MCF 10A (cell line): ENCODE measurements at regions of chr5 and their contacts with region 1.

Region 1: DNA sequence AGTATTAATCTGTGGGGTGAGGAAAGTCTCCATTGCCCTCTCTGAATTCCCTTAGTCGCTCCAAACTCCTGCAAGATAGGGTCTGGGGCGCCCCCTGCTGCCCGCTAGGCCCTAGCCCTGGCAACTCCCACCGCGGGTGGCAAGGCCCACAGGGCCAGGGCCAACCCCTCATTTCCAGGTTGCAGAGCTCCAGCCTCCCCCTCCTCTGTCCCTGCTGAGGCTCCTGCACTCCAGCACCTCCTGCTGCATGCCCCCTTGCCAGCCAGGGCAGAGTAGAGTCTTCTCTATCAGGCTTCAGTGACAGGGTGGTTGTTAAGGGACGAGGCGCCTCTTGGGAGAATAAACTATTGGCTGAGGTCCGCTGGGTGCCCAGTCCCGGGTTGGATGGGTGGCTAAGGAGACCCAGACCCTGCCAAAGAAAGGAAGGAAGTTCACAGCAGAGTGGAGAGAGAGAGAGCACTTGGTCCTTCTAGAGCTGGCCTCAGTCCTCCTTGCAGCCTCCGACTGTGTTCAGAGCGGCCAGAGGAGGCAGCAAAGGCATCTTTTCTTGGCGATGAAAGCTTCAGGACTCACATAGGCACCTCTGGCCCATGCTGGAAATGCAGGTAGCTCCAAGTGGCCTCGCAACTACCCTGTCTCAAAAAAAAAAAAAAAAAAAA is 45.6 kb downstream of the SAR1B start:
- DNase-seq: peak; percentile 88
- H3K4me3 Mint-ChIP-seq: no peak overlapping the region
- H3K27ac Mint-ChIP-seq: no peak overlapping the region
- H3K4me1 Mint-ChIP-seq: peaks cover 18% of the 10 kb centered on the region
- H3K27me3 Mint-ChIP-seq: no peaks in the 10 kb centered on the region
- CTCF ChIP-seq: peak; percentile 89

Region 2: GRCh38 chr5:134296213-134296612 is 290.8 kb before region 1 on chr5:
- CTCF ChIA-PET with region 1: interaction called, 35 read pairs
- POLR2A ChIA-PET with region 1: interaction called, 3 read pairs
- intact Hi-C with region 1: no loop called
- DNase-seq: no peak
- H3K4me3 Mint-ChIP-seq: no peak overlapping the region
- H3K27ac Mint-ChIP-seq: no peak overlapping the region
- H3K4me1 Mint-ChIP-seq: no peaks in the 10 kb centered on the region
- H3K27me3 Mint-ChIP-seq: peaks cover 2% of the 10 kb centered on the region
- CTCF ChIP-seq: no peak

Region 3: DNA sequence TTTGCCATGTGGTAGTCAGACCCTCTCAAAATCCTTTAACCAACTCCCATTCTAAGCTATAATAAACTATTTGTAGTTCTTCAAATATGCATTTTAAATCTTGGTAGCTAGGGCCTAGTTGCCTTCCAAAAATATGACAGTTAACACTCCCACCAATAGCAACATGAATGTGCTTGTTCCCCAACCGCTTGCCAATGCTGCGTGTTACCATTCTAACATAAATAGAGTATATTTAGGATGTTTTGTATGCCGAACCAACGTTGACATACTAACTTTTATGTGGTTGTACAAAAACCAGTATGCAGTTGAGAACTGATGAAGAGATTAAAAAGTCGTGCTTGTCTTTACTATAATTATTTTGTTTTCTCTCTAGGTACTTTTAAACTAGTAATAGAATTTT is 206.6 kb before region 1 on chr5:
- CTCF ChIA-PET with region 1: interaction called, 19 read pairs
- POLR2A ChIA-PET with region 1: interaction called, 4 read pairs
- intact Hi-C with region 1: no loop called
- DNase-seq: no peak
- H3K4me3 Mint-ChIP-seq: no peak overlapping the region
- H3K27ac Mint-ChIP-seq: no peak overlapping the region
- H3K4me1 Mint-ChIP-seq: no peaks in the 10 kb centered on the region
- H3K27me3 Mint-ChIP-seq: no peaks in the 10 kb centered on the region
- CTCF ChIP-seq: no peak

Region 4: GRCh38 chr5:134603059-134603458 is 16.1 kb after region 1 on chr5:
- CTCF ChIA-PET with region 1: interaction called, 31 read pairs
- POLR2A ChIA-PET with region 1: interaction called, 9 read pairs
- intact Hi-C with region 1: no loop called
- DNase-seq: peak; percentile 52
- H3K4me3 Mint-ChIP-seq: no peak overlapping the region
- H3K27ac Mint-ChIP-seq: peak overlapping the region; percentile 63
- H3K4me1 Mint-ChIP-seq: peaks cover 6% of the 10 kb centered on the region
- H3K27me3 Mint-ChIP-seq: no peaks in the 10 kb centered on the region
- CTCF ChIP-seq: no peak

Region 5: DNA sequence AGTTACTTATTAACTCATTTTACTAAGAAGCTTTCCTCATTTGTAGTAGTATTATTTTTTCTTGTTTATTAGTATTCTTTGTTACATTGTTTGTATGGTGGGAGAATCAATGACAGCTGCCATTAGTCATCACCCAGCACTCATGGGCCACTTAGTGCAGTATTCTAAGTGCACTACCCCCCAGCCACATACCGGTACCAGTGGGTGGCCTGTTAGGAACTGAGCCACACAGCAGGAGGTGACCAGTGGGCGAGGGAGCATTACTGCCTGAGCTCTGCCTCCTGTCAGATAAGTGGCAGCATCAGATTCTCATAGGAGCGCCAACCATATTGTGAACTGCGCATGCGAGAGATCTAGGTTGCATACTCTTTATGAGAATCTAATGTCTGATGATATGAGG is 127.1 kb after region 1 on chr5:
- CTCF ChIA-PET with region 1: no interaction called
- POLR2A ChIA-PET with region 1: no interaction called
- intact Hi-C with region 1: no loop called
- DNase-seq: no peak
- H3K4me3 Mint-ChIP-seq: no peak overlapping the region
- H3K27ac Mint-ChIP-seq: no peak overlapping the region
- H3K4me1 Mint-ChIP-seq: no peaks in the 10 kb centered on the region
- H3K27me3 Mint-ChIP-seq: no peaks in the 10 kb centered on the region
- CTCF ChIP-seq: no peak

Region 6: GRCh38 chr5:134851307-134851923 is 264.4 kb after region 1 on chr5:
- CTCF ChIA-PET with region 1: interaction called, 3 read pairs
- POLR2A ChIA-PET with region 1: no interaction called
- intact Hi-C with region 1: loop called (anchors 2 kb)
- DNase-seq: peak; percentile 81
- H3K4me3 Mint-ChIP-seq: no peak overlapping the region
- H3K27ac Mint-ChIP-seq: peak overlapping the region; percentile 18
- H3K4me1 Mint-ChIP-seq: peaks cover 7% of the 10 kb centered on the region
- H3K27me3 Mint-ChIP-seq: no peaks in the 10 kb centered on the region
- CTCF ChIP-seq: peak; percentile 58